A673 (cell line): ENCODE measurements at regions of chr3 and their contacts with region 1.

Region 1: GRCh38 chr3:152444029-152444641 is 175.4 kb downstream of the MBNL1 start:
- DNase-seq: peak; percentile 72
- H3K4me3 ChIP-seq: no peak overlapping the region
- H3K27ac ChIP-seq: no peak overlapping the region
- H3K4me1 ChIP-seq: peaks cover 19% of the 10 kb centered on the region
- H3K27me3 ChIP-seq: no peaks in the 10 kb centered on the region
- CTCF ChIP-seq: peak; percentile 75

Region 2: DNA sequence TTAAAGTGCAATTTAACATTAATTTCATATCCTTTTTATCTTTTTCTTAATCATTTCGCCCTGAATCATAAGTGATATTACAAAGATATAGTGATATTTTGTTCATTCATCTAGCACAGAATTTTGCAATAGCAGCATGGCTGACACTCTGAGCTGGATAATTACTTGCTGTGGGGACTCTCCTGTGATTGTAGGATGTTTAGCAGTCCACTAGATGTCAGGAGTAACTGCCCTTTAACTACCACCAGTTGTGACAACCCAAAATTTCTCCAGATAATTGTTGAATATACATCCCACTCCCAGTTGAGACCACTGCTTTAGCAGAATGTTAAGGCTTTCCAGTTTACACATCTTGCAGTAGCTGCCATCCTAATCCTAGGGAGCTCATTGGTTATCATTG is 372.2 kb before region 1 on chr3:
- CTCF ChIA-PET with region 1: interaction called, 3 read pairs
- POLR2A ChIA-PET with region 1: no interaction called
- intact Hi-C with region 1: loop called (anchors 2 kb)
- DNase-seq: peak; percentile 64
- H3K4me3 ChIP-seq: no peak overlapping the region
- H3K27ac ChIP-seq: no peak overlapping the region
- H3K4me1 ChIP-seq: peaks cover 11% of the 10 kb centered on the region
- H3K27me3 ChIP-seq: no peaks in the 10 kb centered on the region
- CTCF ChIP-seq: peak; percentile 56

Region 3: DNA sequence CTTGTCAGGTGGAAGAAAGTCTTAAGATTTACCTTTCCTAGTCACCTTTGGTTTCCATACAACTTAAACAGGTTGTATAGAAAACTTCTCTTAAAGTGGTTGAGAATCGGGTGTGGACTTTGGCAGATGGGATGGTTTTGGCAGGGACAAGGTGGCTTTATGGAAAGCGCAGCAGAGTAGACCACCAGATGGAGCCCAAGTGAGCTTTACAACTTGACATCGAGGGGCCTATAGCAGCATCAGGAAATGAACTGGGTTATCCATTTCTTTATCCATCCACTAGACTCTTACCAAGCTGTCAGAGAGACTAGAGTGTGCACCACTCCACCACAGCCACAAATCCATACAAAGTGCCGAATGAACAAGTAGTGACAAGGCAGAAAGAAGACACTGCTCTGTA is 260.7 kb before region 1 on chr3:
- CTCF ChIA-PET with region 1: interaction called, 32 read pairs
- POLR2A ChIA-PET with region 1: no interaction called
- intact Hi-C with region 1: loop called (anchors 1 kb)
- DNase-seq: peak; percentile 80
- H3K4me3 ChIP-seq: no peak overlapping the region
- H3K27ac ChIP-seq: no peak overlapping the region
- H3K4me1 ChIP-seq: peaks cover 6% of the 10 kb centered on the region
- H3K27me3 ChIP-seq: no peaks in the 10 kb centered on the region
- CTCF ChIP-seq: peak; percentile 81

Region 4: GRCh38 chr3:152193673-152194267 is 250.4 kb before region 1 on chr3:
- CTCF ChIA-PET with region 1: no interaction called
- POLR2A ChIA-PET with region 1: no interaction called
- intact Hi-C with region 1: no loop called
- DNase-seq: no peak
- H3K4me3 ChIP-seq: no peak overlapping the region
- H3K27ac ChIP-seq: no peak overlapping the region
- H3K4me1 ChIP-seq: no peaks in the 10 kb centered on the region
- H3K27me3 ChIP-seq: no peaks in the 10 kb centered on the region
- CTCF ChIP-seq: no peak

Region 5: DNA sequence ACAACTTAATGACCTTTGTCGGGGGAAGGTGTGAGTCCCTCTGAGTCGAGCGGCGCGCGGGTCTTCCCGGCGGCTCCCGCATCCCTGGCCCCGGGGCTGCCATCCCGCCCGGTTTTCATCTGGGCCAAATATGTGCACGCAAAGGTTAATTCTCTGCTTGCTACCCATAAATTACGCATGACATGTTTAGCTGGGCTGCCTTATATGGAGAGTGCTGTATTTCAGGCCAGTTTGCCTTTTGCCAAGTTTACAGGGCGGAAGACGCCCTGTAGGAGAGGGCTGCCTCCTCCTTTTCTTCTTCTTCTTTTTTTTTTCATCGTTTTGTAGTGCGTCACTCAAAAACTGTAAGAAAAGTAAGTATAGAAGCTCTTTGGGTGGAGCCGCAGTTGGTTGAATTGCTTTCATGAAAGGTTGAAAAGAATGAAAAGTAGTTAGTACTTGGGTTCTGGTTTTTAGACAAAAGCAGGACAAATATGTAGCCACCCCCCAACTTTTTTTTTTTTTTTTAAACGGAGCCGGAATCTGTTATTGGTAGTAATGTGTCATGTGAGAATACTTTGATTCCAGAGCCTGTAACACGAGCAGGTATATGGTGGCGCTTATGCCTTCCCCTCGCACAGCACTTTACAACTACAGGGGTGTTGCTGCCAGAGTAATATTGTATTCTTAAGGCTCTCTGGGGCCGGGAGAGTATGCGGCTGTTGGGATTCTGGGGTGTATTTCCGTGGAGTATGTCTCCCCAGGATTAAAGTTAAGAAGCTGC is 174.5 kb before region 1 on chr3:
- CTCF ChIA-PET with region 1: no interaction called
- POLR2A ChIA-PET with region 1: no interaction called
- intact Hi-C with region 1: loop called (anchors 5 kb)
- DNase-seq: peak; percentile 76
- H3K4me3 ChIP-seq: peak overlapping the region; percentile 82
- H3K27ac ChIP-seq: peak overlapping the region; percentile 93
- H3K4me1 ChIP-seq: peaks cover 23% of the 10 kb centered on the region
- H3K27me3 ChIP-seq: no peaks in the 10 kb centered on the region
- CTCF ChIP-seq: no peak